Ascending aorta (tissue), 2 donors: ENCODE measurements at regions of chr16 and their contacts with region 1.

Region 1: GRCh38 chr16:54633943-54634362 is 296.7 kb upstream of the IRX5 start:
- DNase-seq: peak in 1 of 2 donors; percentile 84
- H3K4me3 ChIP-seq: no peak overlapping the region
- H3K27ac ChIP-seq: peak overlapping the region; percentile 22 to 42
- H3K4me1 ChIP-seq: peaks cover 0 to 8% of the 10 kb centered on the region in 2 donors
- H3K27me3 ChIP-seq: no peaks in the 10 kb centered on the region
- CTCF ChIP-seq: peak; percentile 47 to 83 (median 81)

Region 2: DNA sequence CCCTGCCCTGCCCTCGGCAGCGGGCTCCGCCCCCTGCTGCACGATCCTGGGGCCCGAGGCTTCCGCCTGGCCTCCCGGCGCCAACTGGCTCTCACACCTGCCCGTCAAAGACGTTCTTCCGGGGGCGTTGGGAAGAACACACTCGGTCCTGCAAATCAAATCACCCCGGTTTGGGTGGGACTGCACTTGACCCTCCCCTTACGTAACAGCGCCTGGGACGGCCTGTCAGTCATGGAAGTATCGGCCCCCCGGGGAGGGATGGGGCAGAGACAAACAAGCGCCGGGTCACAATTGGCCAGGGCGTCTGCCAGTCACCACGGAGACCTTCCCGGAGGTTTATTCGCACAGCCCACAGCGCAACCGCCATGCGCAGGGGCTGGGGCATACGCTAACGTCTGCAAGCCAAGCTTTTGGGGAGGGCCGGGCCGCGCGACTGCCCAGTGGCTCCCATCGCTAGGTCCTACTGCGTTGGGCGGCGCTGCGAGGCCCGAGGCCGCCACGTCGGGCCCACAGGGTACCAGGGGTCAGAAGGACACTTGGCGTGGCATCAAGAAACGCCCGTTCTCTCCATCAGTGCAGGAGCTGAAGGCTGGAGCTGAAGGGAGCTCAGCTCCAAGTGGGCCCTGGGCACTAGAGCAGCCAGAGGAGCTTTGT is 1130.6 kb before region 1 on chr16:
- intact Hi-C with region 1: loop called (anchors 10 kb)
- DNase-seq: peak; percentile 100
- H3K4me3 ChIP-seq: peak overlapping the region; percentile 83 to 93
- H3K27ac ChIP-seq: peak overlapping the region; percentile 91 to 97
- H3K4me1 ChIP-seq: peaks cover 10 to 27% of the 10 kb centered on the region in 2 donors
- H3K27me3 ChIP-seq: no peaks in the 10 kb centered on the region
- CTCF ChIP-seq: no peak

Region 3: GRCh38 chr16:54286090-54286993 is 347.6 kb before region 1 on chr16 and contains the start of gene IRX3:
- intact Hi-C with region 1: loop called (anchors 5 kb)
- DNase-seq: peak in 1 of 2 donors; percentile 83
- H3K4me3 ChIP-seq: peak within 1 kb of the TSS; percentile 64 to 73
- H3K27ac ChIP-seq: peak within 1 kb of the TSS; percentile 35 to 59
- H3K4me1 ChIP-seq: peaks cover 16 to 34% of the 10 kb centered on the region in 2 donors
- H3K27me3 ChIP-seq: peaks cover 27% of the 10 kb centered on the region
- CTCF ChIP-seq: no peak
- total RNA-seq, gene IRX3: 0.11 TPM

Region 4: DNA sequence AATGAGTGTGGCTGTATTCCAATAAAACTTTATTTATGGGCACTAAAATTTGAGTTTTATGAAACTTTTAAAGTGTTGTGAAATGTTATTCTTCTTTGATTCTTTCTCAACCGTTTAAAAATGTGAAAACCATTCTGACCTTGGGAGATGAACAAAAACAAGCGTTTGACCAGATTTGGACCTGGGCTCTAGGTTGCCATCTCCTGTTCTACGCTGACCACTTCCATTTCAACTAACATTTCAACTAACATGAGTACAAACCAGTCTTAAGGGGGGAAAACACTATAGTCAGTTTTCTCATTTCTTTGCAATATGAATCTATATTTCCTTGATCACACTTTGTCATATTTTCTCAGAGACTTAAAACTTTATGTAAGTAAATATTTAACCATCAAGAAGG is 178.3 kb after region 1 on chr16:
- intact Hi-C with region 1: loop called (anchors 5 kb)
- DNase-seq: no peak
- H3K4me3 ChIP-seq: no peak overlapping the region
- H3K27ac ChIP-seq: no peak overlapping the region
- H3K4me1 ChIP-seq: peaks cover 0 to 12% of the 10 kb centered on the region in 2 donors
- H3K27me3 ChIP-seq: no peaks in the 10 kb centered on the region
- CTCF ChIP-seq: no peak

Region 5: GRCh38 chr16:55370762-55371482 is 737.0 kb after region 1 on chr16:
- intact Hi-C with region 1: loop called (anchors 5 kb)
- DNase-seq: peak in 1 of 2 donors; percentile 79
- H3K4me3 ChIP-seq: peak overlapping the region in 1 of 2 donors; percentile 30
- H3K27ac ChIP-seq: no peak overlapping the region
- H3K4me1 ChIP-seq: peaks cover 0 to 19% of the 10 kb centered on the region in 2 donors
- H3K27me3 ChIP-seq: no peaks in the 10 kb centered on the region
- CTCF ChIP-seq: peak in 2 of 3 experiments; percentile 45 to 60